Activated CD4-positive, alpha-beta memory T cell treated with anti-CD3 and anti-CD28 coated beads for 36 hours (primary cell): ENCODE measurements at regions of chr12 and their contacts with region 1.

Region 1: GRCh38 chr12:55940065-55940732 is 9.2 kb downstream of the DGKA start:
- DNase-seq: peak; percentile 89
- H3K4me3 Mint-ChIP-seq: no peak overlapping the region
- H3K27ac Mint-ChIP-seq: peak overlapping the region; percentile 55
- H3K4me1 Mint-ChIP-seq: peaks cover 78% of the 10 kb centered on the region
- H3K27me3 Mint-ChIP-seq: no peaks in the 10 kb centered on the region

Region 2: GRCh38 chr12:55365086-55365485 is 575.1 kb before region 1 on chr12:
- CTCF ChIA-PET with region 1: no interaction called
- POLR2A ChIA-PET with region 1: no interaction called
- intact Hi-C with region 1: no loop called
- DNase-seq: no peak
- H3K4me3 Mint-ChIP-seq: no peak overlapping the region
- H3K27ac Mint-ChIP-seq: no peak overlapping the region
- H3K4me1 Mint-ChIP-seq: no peaks in the 10 kb centered on the region
- H3K27me3 Mint-ChIP-seq: peaks cover 10% of the 10 kb centered on the region

Region 3: DNA sequence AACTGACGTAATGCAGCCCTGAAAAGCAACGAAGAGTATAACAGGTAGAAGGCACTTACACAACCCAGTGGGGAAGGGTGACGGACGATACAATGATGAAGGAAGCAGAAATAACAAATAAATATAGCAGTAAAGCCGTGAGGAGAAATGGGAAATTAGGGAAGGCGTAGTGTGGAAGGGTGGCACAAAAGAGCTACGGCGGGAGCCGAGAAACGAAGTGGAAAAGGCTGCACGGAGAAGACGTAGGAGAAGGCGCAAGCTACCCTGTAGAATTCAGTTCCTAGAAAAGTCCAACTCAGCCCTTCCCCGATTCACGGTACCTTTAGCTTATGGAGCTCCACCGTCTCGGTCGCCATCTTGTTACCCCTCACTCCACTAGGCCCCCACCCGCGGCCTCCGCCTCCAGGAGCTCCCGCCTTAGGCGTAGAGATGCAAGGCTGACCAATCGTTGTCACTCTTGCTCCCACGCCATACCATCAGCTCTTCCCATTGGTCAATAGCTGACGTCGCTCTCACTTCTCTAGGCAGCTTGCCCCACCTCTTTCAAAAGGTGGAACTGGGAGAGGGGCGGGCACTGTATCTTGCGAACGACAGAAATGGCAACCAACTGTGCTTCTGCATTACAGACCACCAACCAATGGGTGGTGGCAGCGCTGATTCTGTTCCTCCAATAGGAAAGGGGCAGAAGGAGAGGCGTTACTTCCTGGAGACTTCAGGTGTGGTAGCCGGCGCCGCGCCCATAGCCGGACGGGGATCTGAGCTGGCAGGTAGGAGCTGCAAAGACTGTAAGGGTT is 122.7 kb before region 1 on chr12 and contains the starts of genes ORMDL2 and SARNP:
- CTCF ChIA-PET with region 1: interaction called, 35 read pairs
- POLR2A ChIA-PET with region 1: interaction called, 4 read pairs
- intact Hi-C with region 1: no loop called
- DNase-seq: peak; percentile 99
- H3K4me3 Mint-ChIP-seq: no peak within 1 kb of the TSS
- H3K27ac Mint-ChIP-seq: no peak within 1 kb of the TSS
- H3K4me1 Mint-ChIP-seq: peaks cover 49% of the 10 kb centered on the region
- H3K27me3 Mint-ChIP-seq: no peaks in the 10 kb centered on the region
- total RNA-seq, gene ORMDL2: 37.9 to 41.2 TPM
- total RNA-seq, gene SARNP: 104 to 110 TPM

Region 4: GRCh38 chr12:55955800-55956508 is 15.8 kb after region 1 on chr12:
- CTCF ChIA-PET with region 1: interaction called, 12 read pairs
- POLR2A ChIA-PET with region 1: interaction called, 5 read pairs
- intact Hi-C with region 1: no loop called
- DNase-seq: peak; percentile 69
- H3K4me3 Mint-ChIP-seq: no peak overlapping the region
- H3K27ac Mint-ChIP-seq: peak overlapping the region; percentile 59
- H3K4me1 Mint-ChIP-seq: peaks cover 20% of the 10 kb centered on the region
- H3K27me3 Mint-ChIP-seq: no peaks in the 10 kb centered on the region

Region 5: GRCh38 chr12:55966408-55967281 is 26.4 kb after region 1 on chr12 and contains the start of gene CDK2:
- CTCF ChIA-PET with region 1: interaction called, 11 read pairs
- POLR2A ChIA-PET with region 1: interaction called, 3 read pairs
- intact Hi-C with region 1: no loop called
- DNase-seq: peak; percentile 94
- H3K4me3 Mint-ChIP-seq: peak within 1 kb of the TSS; percentile 85
- H3K27ac Mint-ChIP-seq: peak within 1 kb of the TSS; percentile 80
- H3K4me1 Mint-ChIP-seq: peaks cover 21% of the 10 kb centered on the region
- H3K27me3 Mint-ChIP-seq: no peaks in the 10 kb centered on the region
- total RNA-seq, gene CDK2: 121 to 127 TPM

Region 6: GRCh38 chr12:56041552-56042429 is 101.6 kb after region 1 on chr12 and contains the start of gene RPS26:
- CTCF ChIA-PET with region 1: no interaction called
- POLR2A ChIA-PET with region 1: no interaction called
- intact Hi-C with region 1: no loop called
- DNase-seq: peak; percentile 95
- H3K4me3 Mint-ChIP-seq: peak within 1 kb of the TSS; percentile 98
- H3K27ac Mint-ChIP-seq: peak within 1 kb of the TSS; percentile 98
- H3K4me1 Mint-ChIP-seq: peaks cover 47% of the 10 kb centered on the region
- H3K27me3 Mint-ChIP-seq: no peaks in the 10 kb centered on the region
- total RNA-seq, gene RPS26: 28.1 to 40.7 TPM

Region 7: DNA sequence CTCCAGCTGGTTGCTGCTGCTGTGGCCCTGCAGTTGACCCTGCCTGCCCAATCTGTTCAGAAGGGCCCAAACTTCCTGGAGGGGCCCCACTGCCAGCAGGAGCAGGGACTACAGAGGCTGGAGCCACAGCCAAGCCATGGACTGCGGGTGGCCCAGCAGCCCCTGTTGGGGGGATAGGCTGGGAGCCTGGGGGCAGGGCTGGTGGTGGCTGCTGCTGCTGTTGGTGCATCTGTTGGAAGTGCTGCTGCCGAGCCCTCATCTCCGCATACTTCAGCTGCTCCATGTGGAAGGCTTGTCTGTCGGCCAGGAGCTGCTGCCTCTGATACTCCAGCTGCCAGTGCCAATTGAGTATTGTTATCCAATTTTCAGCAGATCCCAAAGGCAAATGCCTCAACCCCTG is 225.2 kb after region 1 on chr12:
- CTCF ChIA-PET with region 1: no interaction called
- POLR2A ChIA-PET with region 1: no interaction called
- intact Hi-C with region 1: no loop called
- DNase-seq: no peak
- H3K4me3 Mint-ChIP-seq: no peak overlapping the region
- H3K27ac Mint-ChIP-seq: no peak overlapping the region
- H3K4me1 Mint-ChIP-seq: peaks cover 19% of the 10 kb centered on the region
- H3K27me3 Mint-ChIP-seq: no peaks in the 10 kb centered on the region